ENCODE measurements at regions of chr3 and their contacts with region 1.

Region 1: GRCh38 chr3:169387751-169388696 is 275.5 kb downstream of the MECOM start:
- DNase-seq: peak; percentile 81

Region 2: DNA sequence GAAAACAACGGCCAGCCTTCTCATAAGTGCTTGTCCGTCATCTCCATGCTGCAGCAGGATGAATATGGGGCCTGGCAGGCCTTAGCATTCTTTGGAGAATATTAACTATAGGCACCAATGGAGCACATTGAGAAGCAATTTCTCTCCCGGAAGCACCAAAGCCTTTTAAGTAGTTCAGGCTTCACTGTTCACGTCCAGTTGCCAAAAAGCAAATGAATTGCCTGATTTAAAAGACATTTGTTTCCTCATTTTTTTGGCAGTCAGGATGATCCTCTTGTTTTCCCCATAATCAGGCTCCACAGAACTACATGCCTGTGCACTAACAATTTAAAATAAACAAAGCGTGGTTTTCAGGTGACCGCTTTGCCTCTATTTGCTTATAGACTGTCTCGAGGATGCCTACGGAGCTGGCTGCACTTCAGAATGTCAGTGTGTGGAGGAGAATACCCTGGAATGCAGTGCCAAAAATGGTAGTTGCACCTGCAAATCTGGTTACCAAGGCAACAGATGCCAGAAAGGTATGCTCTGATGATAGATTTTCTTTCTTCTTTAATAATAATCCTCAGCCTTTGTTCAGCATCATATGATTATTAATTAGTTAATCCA is 567.1 kb before region 1 on chr3:
- intact Hi-C with region 1: no loop called
- DNase-seq: no peak

Region 3: GRCh38 chr3:168961271-168961670 is 426.8 kb before region 1 on chr3:
- intact Hi-C with region 1: no loop called
- DNase-seq: no peak

Region 4: GRCh38 chr3:169264711-169265110 is 123.3 kb before region 1 on chr3:
- intact Hi-C with region 1: loop called (anchors 10 kb)
- DNase-seq: no peak

Region 5: DNA sequence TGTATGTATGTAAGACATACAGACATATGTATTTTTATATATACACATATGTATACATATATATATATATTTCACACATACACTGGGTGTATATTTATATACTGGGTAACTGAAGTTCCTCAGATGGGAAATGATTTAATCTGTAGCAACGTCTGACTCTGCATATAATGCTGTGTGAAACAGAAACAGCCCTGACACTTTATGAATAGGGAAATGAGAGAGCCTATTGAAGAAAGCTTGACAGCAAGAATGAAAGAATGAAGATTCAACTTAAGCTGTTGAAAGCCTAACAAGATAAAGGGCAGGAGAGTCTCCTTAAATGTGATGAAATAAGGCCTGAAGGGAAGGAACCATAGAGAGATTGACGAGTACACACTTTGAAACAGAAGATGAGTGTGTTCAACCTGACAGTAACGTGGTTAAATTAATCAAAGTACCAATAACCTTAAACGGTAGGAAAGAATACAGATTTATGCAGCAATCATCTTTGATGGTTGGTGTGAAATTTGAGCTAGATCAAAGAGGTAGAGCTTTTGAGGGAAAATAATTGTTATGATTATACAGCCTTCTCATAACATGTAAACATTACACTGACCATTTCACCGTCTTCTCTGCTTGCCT is 105.6 kb after region 1 on chr3:
- intact Hi-C with region 1: no loop called
- DNase-seq: no peak

Measured in cardiac septum (tissue), 1 donor.